A673 (cell line): ENCODE measurements at regions of chr5 and their contacts with region 1.

Region 1: GRCh38 chr5:29099585-29099984 is 2061.2 kb upstream of the CDH9 start:
- DNase-seq: no peak
- H3K4me3 ChIP-seq: no peak overlapping the region
- H3K27ac ChIP-seq: no peak overlapping the region
- H3K4me1 ChIP-seq: no peaks in the 10 kb centered on the region
- H3K27me3 ChIP-seq: no peaks in the 10 kb centered on the region
- CTCF ChIP-seq: no peak

Region 2: GRCh38 chr5:29122306-29122705 is 22.7 kb after region 1 on chr5:
- CTCF ChIA-PET with region 1: no interaction called
- POLR2A ChIA-PET with region 1: no interaction called
- intact Hi-C with region 1: loop called (anchors 2 kb)
- DNase-seq: no peak
- H3K4me3 ChIP-seq: no peak overlapping the region
- H3K27ac ChIP-seq: no peak overlapping the region
- H3K4me1 ChIP-seq: peaks cover 3% of the 10 kb centered on the region
- H3K27me3 ChIP-seq: no peaks in the 10 kb centered on the region
- CTCF ChIP-seq: no peak